Posterior cingulate gyrus (tissue), 11 donors: ENCODE measurements at regions of chr11 and their contacts with region 1.

Region 1: DNA sequence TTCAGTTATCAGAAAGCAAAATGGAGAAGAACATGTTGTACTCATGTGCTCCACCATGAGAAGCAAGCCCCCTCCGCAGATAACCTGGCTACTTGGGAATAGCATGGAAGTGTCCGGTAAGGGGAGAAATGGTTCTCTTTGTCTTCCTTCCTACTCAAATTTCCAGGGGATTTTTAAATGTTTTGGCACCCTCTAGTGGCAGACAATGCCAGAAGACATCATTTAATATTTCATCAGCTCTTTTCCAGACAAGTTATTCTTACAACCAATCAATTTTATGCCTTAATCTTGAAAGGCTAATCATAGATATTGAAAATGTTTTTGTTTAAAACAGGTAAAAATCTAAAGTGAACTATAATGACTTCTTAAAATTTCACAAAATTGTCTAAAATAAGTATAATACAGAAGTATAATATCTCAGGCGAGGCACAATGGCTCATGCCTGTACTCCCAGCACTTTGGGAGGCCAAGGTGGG is 15.7 kb downstream of the CRTAM start:
- DNase-seq: peak in 2 of 10 donors; percentile 23 to 26

Region 2: GRCh38 chr11:122681735-122682134 is 172.3 kb before region 1 on chr11:
- intact Hi-C with region 1: no loop called
- DNase-seq: peak in 6 of 10 donors; percentile 25 to 92 (median 64)

Region 3: GRCh38 chr11:122743949-122744348 is 110.1 kb before region 1 on chr11:
- intact Hi-C with region 1: no loop called
- DNase-seq: no peak

Region 4: GRCh38 chr11:122796128-122796717 is 57.8 kb before region 1 on chr11:
- intact Hi-C with region 1: loop called (anchors 10 kb)
- DNase-seq: peak in 4 of 10 donors; percentile 13 to 39 (median 28)

Region 5: GRCh38 chr11:122814401-122814800 is 39.6 kb before region 1 on chr11:
- intact Hi-C with region 1: no loop called
- DNase-seq: no peak

Region 6: GRCh38 chr11:123235117-123235655 is 381.2 kb after region 1 on chr11:
- intact Hi-C with region 1: no loop called
- DNase-seq: peak in 6 of 10 donors; percentile 34 to 91 (median 62)